ENCODE measurements at regions of chr5 and their contacts with region 1.

Region 1: GRCh38 chr5:74127381-74128320 is 501.7 kb downstream of the ARHGEF28 start:
- DNase-seq: peak; percentile 40
- H3K4me3 Mint-ChIP-seq: peak overlapping the region; percentile 30
- H3K27ac Mint-ChIP-seq: no peak overlapping the region
- H3K4me1 Mint-ChIP-seq: peaks cover 7% of the 10 kb centered on the region
- H3K27me3 Mint-ChIP-seq: no peaks in the 10 kb centered on the region
- CTCF ChIP-seq: peak; percentile 21

Region 2: GRCh38 chr5:73902327-73903051 is 225.2 kb before region 1 on chr5:
- CTCF ChIA-PET with region 1: interaction called, 4 read pairs
- POLR2A ChIA-PET with region 1: no interaction called
- intact Hi-C with region 1: loop called (anchors 5 kb)
- DNase-seq: peak; percentile 75
- H3K4me3 Mint-ChIP-seq: no peak overlapping the region
- H3K27ac Mint-ChIP-seq: peak overlapping the region; percentile 74
- H3K4me1 Mint-ChIP-seq: peaks cover 15% of the 10 kb centered on the region
- H3K27me3 Mint-ChIP-seq: no peaks in the 10 kb centered on the region
- CTCF ChIP-seq: peak; percentile 59

Region 3: GRCh38 chr5:74196233-74196632 is 68.6 kb after region 1 on chr5:
- CTCF ChIA-PET with region 1: no interaction called
- POLR2A ChIA-PET with region 1: no interaction called
- intact Hi-C with region 1: no loop called
- DNase-seq: no peak
- H3K4me3 Mint-ChIP-seq: no peak overlapping the region
- H3K27ac Mint-ChIP-seq: no peak overlapping the region
- H3K4me1 Mint-ChIP-seq: peaks cover 2% of the 10 kb centered on the region
- H3K27me3 Mint-ChIP-seq: no peaks in the 10 kb centered on the region
- CTCF ChIP-seq: no peak

Region 4: DNA sequence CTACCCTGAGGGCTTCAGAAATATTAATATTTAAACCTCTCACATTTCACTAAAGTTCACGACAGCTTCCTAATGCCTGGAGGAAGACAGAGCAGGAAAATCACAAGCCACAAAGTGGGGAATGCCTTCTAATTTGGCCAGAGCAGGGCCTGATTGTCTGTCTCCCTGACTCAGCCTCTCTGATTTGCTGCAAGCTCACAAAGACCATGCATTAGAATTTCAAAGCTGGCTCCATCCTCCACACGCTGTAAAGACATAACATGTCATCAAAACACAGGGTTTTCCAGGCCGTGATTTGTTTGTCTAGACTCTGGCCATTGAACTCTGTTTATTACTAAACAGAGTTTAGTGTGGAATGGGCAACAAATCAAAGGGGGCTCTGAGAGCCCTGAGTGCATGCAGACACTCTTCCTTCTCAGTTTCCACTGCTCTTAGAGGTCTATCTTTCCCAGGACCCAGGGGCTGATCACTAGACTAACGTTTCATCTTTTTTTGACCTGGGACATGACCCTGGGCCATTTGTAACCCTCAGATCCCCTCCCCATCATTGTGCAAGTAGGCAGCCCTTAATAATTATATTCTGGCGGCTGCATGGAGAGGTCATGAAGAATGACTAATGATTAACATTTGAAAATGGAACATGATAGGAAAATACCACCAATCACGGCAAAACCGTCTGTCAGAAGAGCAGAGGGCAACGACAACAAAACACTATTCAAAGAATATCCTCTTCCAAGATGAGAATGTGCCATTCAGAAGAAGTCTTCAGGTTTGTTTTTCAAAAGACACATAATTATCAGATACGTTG is 372.7 kb after region 1 on chr5:
- CTCF ChIA-PET with region 1: no interaction called
- POLR2A ChIA-PET with region 1: no interaction called
- intact Hi-C with region 1: no loop called
- DNase-seq: no peak
- H3K4me3 Mint-ChIP-seq: no peak overlapping the region
- H3K27ac Mint-ChIP-seq: no peak overlapping the region
- H3K4me1 Mint-ChIP-seq: no peaks in the 10 kb centered on the region
- H3K27me3 Mint-ChIP-seq: no peaks in the 10 kb centered on the region
- CTCF ChIP-seq: no peak

Measured in MCF 10A (cell line).